ENCODE measurements at regions of chr15 and their contacts with region 1.

Region 1: DNA sequence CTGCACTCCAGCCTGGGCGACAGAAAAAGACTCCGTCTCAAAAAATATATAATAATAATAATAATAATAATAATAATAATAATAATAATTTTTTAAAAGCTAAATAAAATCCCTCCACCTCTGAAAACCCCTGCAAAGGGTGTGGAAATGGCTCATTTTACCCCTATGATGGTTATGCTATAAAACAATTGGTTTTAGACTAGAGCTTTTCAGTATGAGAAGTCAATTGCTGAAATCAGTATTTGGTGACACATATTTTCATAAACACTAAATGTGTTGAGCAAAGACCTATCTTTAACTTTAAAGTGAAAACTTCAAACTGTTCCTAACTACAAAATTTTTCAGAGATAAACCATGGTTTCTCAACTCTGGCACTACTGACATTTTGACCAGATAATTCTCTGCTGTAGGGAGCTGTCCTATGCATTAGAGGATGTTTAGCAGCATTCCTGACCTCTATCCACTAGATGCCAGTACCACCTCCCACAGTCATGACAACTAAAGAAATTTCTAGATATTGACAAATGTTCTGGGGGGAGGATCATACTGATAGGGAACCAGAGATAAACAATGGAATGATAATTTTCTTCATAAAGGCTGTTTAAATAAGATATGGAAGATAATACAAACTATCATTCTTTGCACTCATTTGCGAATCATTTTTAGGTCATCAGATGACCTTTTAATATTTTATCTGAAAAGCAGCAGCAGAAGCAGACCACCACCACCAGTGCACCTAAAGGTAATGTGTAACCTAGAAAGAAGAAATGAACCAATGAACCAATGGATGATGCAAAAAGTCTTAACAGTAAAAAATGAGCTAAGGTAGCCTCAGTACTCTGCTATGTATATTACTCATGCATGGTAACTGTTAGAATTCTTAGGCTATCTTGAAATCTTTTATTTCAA is 13.8 kb downstream of the PTPN9 start:
- DNase-seq: no peak
- ATAC-seq: no peak
- H3K4me3 ChIP-seq: no peak overlapping the region
- H3K27ac ChIP-seq: no peak overlapping the region
- H3K4me1 ChIP-seq: no peaks in the 10 kb centered on the region
- H3K27me3 ChIP-seq: no peaks in the 10 kb centered on the region
- CTCF ChIP-seq: no peak

Region 2: GRCh38 chr15:75554717-75555116 is 10.6 kb before region 1 on chr15:
- CTCF ChIA-PET with region 1: interaction called, 12 read pairs
- POLR2A ChIA-PET with region 1: no interaction called
- in situ Hi-C with region 1: no loop called
- intact Hi-C with region 1: no loop called
- DNase-seq: no peak
- ATAC-seq: no peak
- H3K4me3 ChIP-seq: no peak overlapping the region
- H3K27ac ChIP-seq: no peak overlapping the region
- H3K4me1 ChIP-seq: no peaks in the 10 kb centered on the region
- H3K27me3 ChIP-seq: no peaks in the 10 kb centered on the region
- CTCF ChIP-seq: no peak

Region 3: GRCh38 chr15:75578206-75578947 is 13.1 kb after region 1 on chr15:
- CTCF ChIA-PET with region 1: no interaction called
- POLR2A ChIA-PET with region 1: no interaction called
- in situ Hi-C with region 1: no loop called
- intact Hi-C with region 1: no loop called
- DNase-seq: no peak
- ATAC-seq: peak; percentile 67
- H3K4me3 ChIP-seq: peak overlapping the region; percentile 86 to 98
- H3K27ac ChIP-seq: peak overlapping the region; percentile 95
- H3K4me1 ChIP-seq: peaks cover 14% of the 10 kb centered on the region
- H3K27me3 ChIP-seq: no peaks in the 10 kb centered on the region
- CTCF ChIP-seq: no peak